ENCODE measurements at regions of chr7 and their contacts with region 1.

Region 1: DNA sequence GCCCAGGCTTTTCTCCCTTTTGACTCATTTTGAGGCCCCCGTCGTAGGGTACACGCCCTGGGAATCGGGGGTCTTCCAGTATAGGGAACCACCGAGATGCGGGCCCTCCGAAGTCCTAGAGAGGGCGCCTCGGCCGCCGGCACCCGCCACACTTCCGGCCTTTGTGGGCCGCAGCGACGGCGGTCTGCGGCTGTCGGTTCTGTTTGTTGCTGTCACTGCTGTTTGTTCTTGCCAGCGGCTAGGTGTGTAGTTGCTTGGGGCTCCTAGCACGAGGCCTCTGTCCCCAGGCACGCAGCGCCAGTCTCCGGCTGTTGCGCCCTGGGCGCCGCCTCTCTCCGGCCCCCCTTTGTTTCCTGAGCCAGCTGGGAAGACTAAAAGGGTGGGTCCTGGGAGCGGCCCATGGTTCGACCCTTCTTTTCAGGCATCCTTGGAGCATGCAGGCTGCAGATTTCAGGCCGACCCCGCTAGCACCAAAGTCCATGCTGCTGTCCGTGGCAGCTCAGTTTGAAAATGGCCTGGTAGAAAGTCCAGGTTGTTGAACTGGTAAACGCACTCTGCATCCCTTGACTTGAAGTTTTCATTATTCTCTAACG is 17.8 kb upstream of the ZKSCAN1 start:
- DNase-seq: peak; percentile 50 to 71
- ATAC-seq: peak; percentile 67 to 85 (median 82)
- H3K4me3 ChIP-seq: peak overlapping the region; percentile 13 to 68 (median 61)
- H3K27ac ChIP-seq: peak overlapping the region; percentile 54 to 93 (median 85)
- H3K4me1 ChIP-seq: peaks cover 0 to 25% (median 17%) of the 10 kb centered on the region in 9 donors
- H3K27me3 ChIP-seq: no peaks in the 10 kb centered on the region
- CTCF ChIP-seq: peak in 7 of 9 donors; percentile 29 to 60 (median 45)

Region 2: DNA sequence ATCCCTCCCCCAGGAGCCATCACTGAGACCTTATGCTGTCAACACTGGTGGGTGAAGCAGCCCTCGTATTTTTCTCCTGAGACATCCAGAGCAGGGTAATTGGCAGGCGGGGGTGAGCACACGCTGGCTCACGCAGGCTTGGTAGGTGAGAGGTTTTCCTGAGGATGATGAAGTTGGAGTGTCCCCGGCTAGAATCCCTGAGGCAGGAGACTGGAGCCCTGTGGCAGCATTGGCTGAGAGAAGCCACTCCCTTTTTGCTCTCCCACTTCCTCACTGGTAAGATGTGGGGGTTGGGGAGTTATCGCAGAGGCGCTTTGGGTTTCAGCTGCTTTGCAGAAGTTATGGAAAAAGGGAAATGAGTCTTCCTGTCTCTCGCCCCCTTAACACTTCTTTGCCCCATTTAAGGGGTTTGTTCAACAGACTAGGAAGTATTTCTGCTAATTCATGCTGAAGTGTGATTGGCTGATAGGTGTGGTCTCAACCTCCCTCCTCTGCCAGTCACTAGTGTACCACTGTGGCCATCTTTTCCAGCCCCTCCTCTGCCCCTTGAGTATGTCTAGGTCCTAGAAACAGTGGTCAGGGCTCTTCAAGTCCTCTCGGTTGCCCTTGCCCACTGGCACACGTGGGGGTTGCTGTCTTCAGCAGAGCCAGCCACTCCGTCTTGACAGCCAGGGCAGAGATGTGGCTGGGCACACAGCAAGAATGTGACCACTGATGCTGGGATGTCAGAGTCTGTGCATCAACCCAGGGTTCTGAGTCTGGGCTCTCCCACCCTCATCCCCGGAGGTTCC is 617.4 kb before region 1 on chr7:
- intact Hi-C with region 1: no loop called
- DNase-seq: peak in 1 of 2 donors; percentile 59
- ATAC-seq: peak; percentile 26 to 72 (median 56)
- H3K4me3 ChIP-seq: peak overlapping the region in 9 of 10 donors; percentile 2 to 50 (median 33)
- H3K27ac ChIP-seq: peak overlapping the region; percentile 61 to 97 (median 89)
- H3K4me1 ChIP-seq: peaks cover 14 to 90% (median 51%) of the 10 kb centered on the region in 9 donors
- H3K27me3 ChIP-seq: no peaks in the 10 kb centered on the region
- CTCF ChIP-seq: no peak

Region 3: DNA sequence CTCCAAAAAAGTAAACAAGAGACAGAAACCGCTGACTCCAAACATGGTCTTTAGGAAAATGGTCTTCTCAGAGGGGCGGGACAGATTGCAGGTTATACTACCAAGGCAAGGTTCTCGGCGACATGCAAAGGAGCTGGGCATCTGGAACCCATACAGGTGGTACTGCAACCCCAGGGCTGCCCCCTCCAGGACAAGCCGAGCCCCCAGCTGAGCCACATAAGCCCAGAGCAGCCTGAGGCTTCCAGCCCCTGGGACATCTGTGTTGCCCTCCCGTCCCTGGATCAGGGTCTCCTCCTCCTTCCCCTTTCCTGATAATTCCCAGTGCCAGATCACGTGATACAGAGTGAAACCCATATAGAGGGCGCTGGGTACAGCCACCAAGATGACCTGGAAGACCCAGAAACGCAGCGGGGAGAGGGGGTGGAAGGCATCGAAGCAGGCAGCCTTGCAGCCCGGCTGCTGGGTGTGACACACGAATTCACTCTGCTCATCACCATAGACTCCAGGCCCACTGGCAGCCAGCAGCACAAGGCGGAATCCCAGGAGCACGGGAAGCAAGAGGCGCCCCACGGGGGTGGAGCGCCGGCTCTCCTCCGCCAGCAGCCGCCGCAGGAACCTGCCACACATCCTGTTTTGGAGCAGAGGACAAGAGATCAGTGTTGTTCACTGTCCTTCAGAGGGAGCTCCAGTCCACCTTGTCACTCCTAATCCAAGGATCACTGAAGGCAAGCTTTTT is 68.5 kb before region 1 on chr7 and contains the start of gene GJC3:
- intact Hi-C with region 1: loop called in 2 of 10 experiments (anchors 5 to 10 kb)
- DNase-seq: peak; percentile 68 to 73
- ATAC-seq: peak; percentile 93 to 100 (median 96)
- H3K4me3 ChIP-seq: peak within 1 kb of the TSS in 8 of 10 donors; percentile 8 to 50 (median 42)
- H3K27ac ChIP-seq: peak within 1 kb of the TSS; percentile 14 to 79 (median 70)
- H3K4me1 ChIP-seq: peaks cover 4 to 21% (median 11%) of the 10 kb centered on the region in 9 donors
- H3K27me3 ChIP-seq: peaks cover 0 to 18% (median 0%) of the 10 kb centered on the region in 7 donors
- CTCF ChIP-seq: peak; percentile 12 to 75 (median 55)
- total RNA-seq, gene GJC3: 0.44 TPM in 1 of 10 donors, not detected in the others

Region 4: GRCh38 chr7:100081535-100082102 is 84.0 kb after region 1 on chr7 and contains the start of gene ZNF3:
- intact Hi-C with region 1: loop called in 6 of 10 experiments (anchors 1 to 10 kb)
- DNase-seq: peak; percentile 98 to 99
- ATAC-seq: peak; percentile 96 to 98 (median 96)
- H3K4me3 ChIP-seq: peak within 1 kb of the TSS; percentile 71 to 99 (median 90)
- H3K27ac ChIP-seq: peak within 1 kb of the TSS; percentile 65 to 96 (median 89)
- H3K4me1 ChIP-seq: peaks cover 7 to 42% (median 35%) of the 10 kb centered on the region in 9 donors
- H3K27me3 ChIP-seq: no peaks in the 10 kb centered on the region
- CTCF ChIP-seq: peak; percentile 85 to 99 (median 95)
- total RNA-seq, gene ZNF3: 14.1 to 17.8 (median 15.3) TPM

Region 5: GRCh38 chr7:100126931-100127865 is 129.6 kb after region 1 on chr7 and contains the start of gene MBLAC1:
- intact Hi-C with region 1: loop called in 7 of 10 experiments (anchors 5 kb)
- DNase-seq: peak; percentile 85 to 93
- ATAC-seq: peak; percentile 92 to 97 (median 96)
- H3K4me3 ChIP-seq: peak within 1 kb of the TSS; percentile 81 to 98 (median 94)
- H3K27ac ChIP-seq: peak within 1 kb of the TSS; percentile 82 to 98 (median 96)
- H3K4me1 ChIP-seq: peaks cover 11 to 43% (median 22%) of the 10 kb centered on the region in 9 donors
- H3K27me3 ChIP-seq: no peaks in the 10 kb centered on the region
- CTCF ChIP-seq: peak in 1 of 9 donors; percentile 3
- total RNA-seq, gene MBLAC1: 1.2 to 3.5 (median 2.0) TPM